ENCODE measurements at regions of chr6 and their contacts with region 1.

Region 1: GRCh38 chr6:158143700-158144099 is 24.4 kb downstream of the SERAC1 start:
- DNase-seq: peak; percentile 36
- ATAC-seq: peak; percentile 81
- H3K4me3 Mint-ChIP-seq: no peak overlapping the region
- H3K27ac Mint-ChIP-seq: no peak overlapping the region
- H3K4me1 Mint-ChIP-seq: no peaks in the 10 kb centered on the region
- H3K27me3 Mint-ChIP-seq: no peaks in the 10 kb centered on the region
- CTCF ChIP-seq: peak; percentile 27; the same call in 1 of the 2 replicates

Region 2: GRCh38 chr6:158161566-158162255 is 18.0 kb after region 1 on chr6:
- CTCF ChIA-PET with region 1: interaction called, 18 read pairs
- POLR2A ChIA-PET with region 1: no interaction called
- DNase-seq: peak; percentile 45
- ATAC-seq: peak; percentile 100
- H3K4me3 Mint-ChIP-seq: peak overlapping the region; percentile 0; the same call in 1 of the 2 replicates
- H3K27ac Mint-ChIP-seq: peak overlapping the region; percentile 1
- H3K4me1 Mint-ChIP-seq: peaks cover 25% of the 10 kb centered on the region
- H3K27me3 Mint-ChIP-seq: peaks cover 11% of the 10 kb centered on the region
- CTCF ChIP-seq: no peak

Region 3: DNA sequence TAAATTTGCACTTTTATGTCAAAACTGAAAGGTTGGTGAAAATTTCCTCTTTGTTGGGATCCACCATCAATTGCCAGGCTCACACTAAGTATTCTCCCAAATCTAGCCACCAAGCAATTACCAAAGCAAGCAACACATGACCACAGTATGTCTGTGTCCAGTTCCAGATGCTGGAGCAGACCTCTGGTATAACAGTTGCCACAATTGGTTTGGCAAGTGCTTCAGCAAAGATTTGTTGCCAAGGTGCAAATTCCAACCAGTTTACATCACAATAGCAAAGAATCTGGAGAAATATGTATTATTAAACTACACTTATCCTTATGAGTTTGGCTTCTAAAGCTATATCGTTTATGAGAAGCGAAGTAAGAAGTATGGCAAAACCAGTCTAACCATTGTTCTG is 30.8 kb after region 1 on chr6:
- CTCF ChIA-PET with region 1: no interaction called
- POLR2A ChIA-PET with region 1: no interaction called
- DNase-seq: no peak
- ATAC-seq: no peak
- H3K4me3 Mint-ChIP-seq: no peak overlapping the region
- H3K27ac Mint-ChIP-seq: no peak overlapping the region
- H3K4me1 Mint-ChIP-seq: peaks cover 24% of the 10 kb centered on the region
- H3K27me3 Mint-ChIP-seq: no peaks in the 10 kb centered on the region
- CTCF ChIP-seq: no peak

Region 4: GRCh38 chr6:158194487-158195280 is 51.0 kb after region 1 on chr6:
- CTCF ChIA-PET with region 1: interaction called, 14 read pairs
- POLR2A ChIA-PET with region 1: no interaction called
- DNase-seq: no peak
- ATAC-seq: peak; percentile 82
- H3K4me3 Mint-ChIP-seq: peak overlapping the region; percentile 64
- H3K27ac Mint-ChIP-seq: peak overlapping the region; percentile 64
- H3K4me1 Mint-ChIP-seq: peaks cover 57% of the 10 kb centered on the region
- H3K27me3 Mint-ChIP-seq: no peaks in the 10 kb centered on the region
- CTCF ChIP-seq: no peak

Region 5: GRCh38 chr6:158439255-158439654 is 295.6 kb after region 1 on chr6:
- CTCF ChIA-PET with region 1: no interaction called
- POLR2A ChIA-PET with region 1: no interaction called
- DNase-seq: no peak
- ATAC-seq: no peak
- H3K4me3 Mint-ChIP-seq: no peak overlapping the region
- H3K27ac Mint-ChIP-seq: no peak overlapping the region
- H3K4me1 Mint-ChIP-seq: no peaks in the 10 kb centered on the region
- H3K27me3 Mint-ChIP-seq: no peaks in the 10 kb centered on the region
- CTCF ChIP-seq: no peak

Measured in WTC11 (cell line).